Activated CD4-positive, alpha-beta memory T cell treated with anti-CD3 and anti-CD28 coated beads for 36 hours (primary cell): ENCODE measurements at regions of chr1 and their contacts with region 1.

Region 1: DNA sequence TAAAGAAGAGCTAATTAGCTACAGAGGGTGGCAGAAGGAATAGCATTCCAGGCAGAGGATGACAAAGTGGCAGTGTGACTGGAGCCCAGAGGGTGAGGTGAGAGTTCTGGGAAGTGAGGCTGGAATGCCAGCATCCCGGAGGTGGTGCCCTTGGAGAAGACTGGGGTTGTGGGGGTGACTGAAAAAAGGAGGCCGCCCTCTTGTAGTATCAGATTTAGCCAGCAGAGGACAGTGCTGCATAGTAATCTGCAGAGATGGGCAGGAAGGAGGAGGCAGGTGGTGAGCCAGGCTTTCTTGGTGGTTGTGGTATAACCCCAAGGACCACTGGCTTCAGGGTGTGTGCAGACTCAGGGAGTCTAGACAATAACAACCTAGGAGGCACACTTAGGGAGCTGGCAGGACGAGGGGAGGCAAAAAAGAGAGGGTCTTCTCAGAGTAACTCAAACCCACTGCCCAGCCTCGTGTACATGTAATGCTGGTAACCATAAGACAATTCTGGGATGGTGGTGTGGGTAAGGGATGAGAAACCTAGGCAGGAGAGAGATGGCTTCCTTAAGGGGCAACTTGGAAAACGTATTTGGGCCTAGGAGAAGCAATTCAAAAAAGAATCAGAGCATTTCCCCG is 30.5 kb downstream of the MROH7 start:
- DNase-seq: peak; percentile 84
- H3K4me3 Mint-ChIP-seq: no peak overlapping the region
- H3K27ac Mint-ChIP-seq: no peak overlapping the region
- H3K4me1 Mint-ChIP-seq: peaks cover 4% of the 10 kb centered on the region
- H3K27me3 Mint-ChIP-seq: peaks cover 5% of the 10 kb centered on the region

Region 2: GRCh38 chr1:54052934-54053744 is 619.0 kb before region 1 on chr1 and contains the starts of genes TCEANC2 and TMEM59:
- CTCF ChIA-PET with region 1: no interaction called
- POLR2A ChIA-PET with region 1: no interaction called
- intact Hi-C with region 1: no loop called
- DNase-seq: peak; percentile 99
- H3K4me3 Mint-ChIP-seq: no peak within 1 kb of the TSS
- H3K27ac Mint-ChIP-seq: no peak within 1 kb of the TSS
- H3K4me1 Mint-ChIP-seq: peaks cover 30% of the 10 kb centered on the region
- H3K27me3 Mint-ChIP-seq: no peaks in the 10 kb centered on the region
- total RNA-seq, gene TCEANC2: 12.8 to 13.6 TPM
- total RNA-seq, gene TMEM59: 142 to 149 TPM

Region 3: GRCh38 chr1:54464482-54465146 is 207.5 kb before region 1 on chr1:
- CTCF ChIA-PET with region 1: no interaction called
- POLR2A ChIA-PET with region 1: no interaction called
- intact Hi-C with region 1: no loop called
- DNase-seq: no peak
- H3K4me3 Mint-ChIP-seq: no peak overlapping the region
- H3K27ac Mint-ChIP-seq: peak overlapping the region; percentile 15
- H3K4me1 Mint-ChIP-seq: peaks cover 32% of the 10 kb centered on the region
- H3K27me3 Mint-ChIP-seq: no peaks in the 10 kb centered on the region

Region 4: DNA sequence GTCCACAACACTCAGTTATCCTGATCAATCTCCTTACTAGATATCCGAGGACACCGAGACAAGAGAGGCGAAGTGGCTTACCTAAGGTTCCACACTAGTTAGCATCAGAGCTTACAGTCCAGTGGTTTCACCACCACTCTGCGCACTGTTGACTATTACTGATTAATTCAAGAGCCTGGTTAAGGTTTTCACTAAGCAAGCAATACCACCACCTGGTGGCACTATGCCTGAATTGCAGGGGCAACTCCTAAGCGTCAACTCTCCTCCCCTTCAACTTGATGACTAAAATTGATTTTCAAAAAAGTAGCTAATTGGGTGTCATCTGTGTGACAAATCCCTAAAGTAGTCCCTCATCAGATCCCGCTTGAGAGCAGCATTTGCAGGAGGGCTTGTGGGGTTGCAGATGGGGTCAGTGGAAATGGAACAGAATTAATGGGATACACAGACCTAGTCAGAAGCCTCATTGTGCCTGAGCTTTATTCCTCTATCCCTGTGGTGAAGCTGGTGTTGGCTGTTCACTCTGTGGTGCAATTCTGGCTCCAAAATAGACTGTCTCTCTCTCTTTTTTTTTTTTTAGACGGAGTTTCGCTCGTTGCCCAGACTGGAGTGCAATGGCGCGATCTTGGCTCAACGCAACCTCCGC is 119.9 kb after region 1 on chr1:
- CTCF ChIA-PET with region 1: interaction called, 14 read pairs
- POLR2A ChIA-PET with region 1: no interaction called
- intact Hi-C with region 1: no loop called
- DNase-seq: peak; percentile 75
- H3K4me3 Mint-ChIP-seq: no peak overlapping the region
- H3K27ac Mint-ChIP-seq: no peak overlapping the region
- H3K4me1 Mint-ChIP-seq: peaks cover 22% of the 10 kb centered on the region
- H3K27me3 Mint-ChIP-seq: no peaks in the 10 kb centered on the region

Region 5: DNA sequence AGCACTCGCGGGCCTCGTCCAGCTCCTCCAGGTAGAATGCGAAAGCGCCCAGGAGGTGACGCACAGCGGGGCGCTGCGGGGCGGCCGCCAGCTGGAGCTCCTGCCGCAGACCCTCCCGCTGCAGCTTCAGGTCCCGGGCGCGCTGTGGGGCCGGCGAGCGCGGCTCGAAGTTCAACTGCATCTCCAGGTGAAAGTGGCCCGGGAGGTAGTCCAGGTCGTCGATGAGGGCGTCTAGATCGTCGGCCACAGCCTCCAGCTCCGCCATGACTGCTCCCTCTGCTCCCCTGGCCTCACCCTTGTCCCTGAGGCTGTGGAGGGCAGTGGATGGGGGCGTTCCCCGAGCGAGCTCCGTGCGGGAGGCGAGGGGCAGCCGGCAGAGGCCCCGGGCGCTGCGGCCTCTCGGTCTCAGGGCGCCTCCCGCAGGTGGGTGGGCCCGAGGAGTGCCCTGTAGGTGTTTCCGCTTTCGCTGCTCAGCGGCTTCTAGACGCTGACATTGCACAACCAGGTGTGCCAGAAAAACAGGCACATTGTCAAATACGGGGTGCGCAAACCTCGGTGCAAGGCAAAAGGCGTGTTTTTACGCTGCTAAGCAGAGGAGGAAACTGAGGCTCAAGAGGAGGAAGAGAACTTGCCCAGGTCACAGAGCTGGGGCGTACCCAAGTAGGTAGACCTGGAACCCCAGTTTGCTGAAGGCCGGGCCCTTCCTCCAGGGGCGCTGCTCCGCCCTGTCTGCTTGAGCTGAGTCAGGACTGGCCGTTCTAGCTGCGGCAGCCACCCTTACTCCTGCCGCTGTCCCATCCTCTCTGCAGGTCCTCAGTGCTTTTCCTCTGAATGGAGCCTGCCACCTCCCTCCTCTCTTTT is 129.0 kb after region 1 on chr1 and contains the start of gene TTC22:
- CTCF ChIA-PET with region 1: interaction called, 28 read pairs
- POLR2A ChIA-PET with region 1: no interaction called
- intact Hi-C with region 1: no loop called
- DNase-seq: peak; percentile 86
- H3K4me3 Mint-ChIP-seq: peak within 1 kb of the TSS; percentile 84
- H3K27ac Mint-ChIP-seq: peak within 1 kb of the TSS; percentile 67
- H3K4me1 Mint-ChIP-seq: peaks cover 56% of the 10 kb centered on the region
- H3K27me3 Mint-ChIP-seq: no peaks in the 10 kb centered on the region
- total RNA-seq, gene TTC22: 4.6 to 5.3 TPM

Region 6: GRCh38 chr1:54810100-54810942 is 138.2 kb after region 1 on chr1:
- CTCF ChIA-PET with region 1: interaction called, 28 read pairs
- POLR2A ChIA-PET with region 1: no interaction called
- intact Hi-C with region 1: loop called (anchors 1 kb)
- DNase-seq: peak; percentile 81
- H3K4me3 Mint-ChIP-seq: no peak overlapping the region
- H3K27ac Mint-ChIP-seq: no peak overlapping the region
- H3K4me1 Mint-ChIP-seq: peaks cover 4% of the 10 kb centered on the region
- H3K27me3 Mint-ChIP-seq: peaks cover 2% of the 10 kb centered on the region

Region 7: DNA sequence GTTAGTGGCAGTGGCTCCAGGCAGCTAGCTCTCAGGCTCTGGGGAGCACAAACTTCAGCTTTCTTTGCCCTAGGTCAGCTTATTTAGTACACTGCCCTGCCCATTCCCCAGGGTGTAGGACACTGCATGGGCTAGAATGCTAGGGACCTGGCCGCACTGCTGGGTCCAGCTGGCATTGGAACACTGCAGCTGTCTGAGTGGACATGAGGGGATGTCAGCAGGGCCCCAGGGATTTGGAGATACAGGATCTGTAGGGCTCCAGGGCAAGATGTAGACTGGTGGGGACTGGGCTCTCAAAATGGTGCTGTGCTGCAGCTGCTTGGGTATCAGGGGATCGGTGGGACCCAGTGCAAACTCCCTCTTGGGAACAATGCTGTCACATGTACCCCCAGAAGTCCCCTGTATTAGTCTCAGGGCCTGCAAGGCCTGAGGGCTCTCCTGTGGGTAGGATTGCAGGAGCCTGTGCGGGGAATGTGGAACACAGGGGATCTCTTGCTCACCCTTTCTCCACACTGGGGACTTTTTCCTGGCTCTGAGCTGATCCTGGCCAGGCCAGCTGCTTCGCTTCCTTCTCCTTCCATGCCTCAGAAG is 154.2 kb after region 1 on chr1:
- CTCF ChIA-PET with region 1: no interaction called
- POLR2A ChIA-PET with region 1: no interaction called
- intact Hi-C with region 1: no loop called
- DNase-seq: no peak
- H3K4me3 Mint-ChIP-seq: no peak overlapping the region
- H3K27ac Mint-ChIP-seq: no peak overlapping the region
- H3K4me1 Mint-ChIP-seq: no peaks in the 10 kb centered on the region
- H3K27me3 Mint-ChIP-seq: no peaks in the 10 kb centered on the region